Mammary epithelial cell (primary cell): ENCODE measurements at regions of chr2 and their contacts with region 1.

Region 1: DNA sequence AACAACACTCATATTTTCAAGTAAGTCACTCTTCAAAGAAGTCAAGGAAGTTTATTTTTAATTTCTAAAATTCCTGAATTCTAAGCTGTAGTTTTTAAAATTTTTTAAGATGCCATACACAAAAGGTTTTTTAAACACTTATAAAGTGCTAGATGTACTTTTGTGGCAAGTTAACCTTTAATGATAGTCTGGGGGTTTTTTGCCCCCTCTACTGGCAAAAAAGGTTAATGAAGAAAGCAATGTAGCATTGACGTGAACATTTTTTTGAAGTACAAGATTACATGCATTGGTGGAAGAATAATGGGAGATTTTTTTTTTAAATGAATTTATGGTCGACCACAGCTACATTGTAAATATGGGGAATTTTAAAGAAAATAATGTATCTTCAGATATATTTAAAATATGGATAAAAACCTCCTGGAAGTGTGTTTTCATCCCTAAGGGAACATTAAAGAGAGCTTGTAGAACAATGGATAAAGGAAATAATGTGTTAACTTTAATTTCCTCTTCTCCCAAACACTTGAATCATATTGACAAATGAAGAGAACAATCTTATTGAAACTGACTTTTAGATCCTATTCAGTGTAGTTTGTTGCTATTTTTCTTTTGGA is 12.6 kb downstream of the ITPRID2 start:
- DNase-seq: no peak
- H3K4me3 ChIP-seq: no peak overlapping the region
- H3K27ac ChIP-seq: no peak overlapping the region
- H3K4me1 ChIP-seq: peaks cover 8% of the 10 kb centered on the region
- H3K27me3 ChIP-seq: no peaks in the 10 kb centered on the region
- CTCF ChIP-seq: peak; percentile 38 to 51

Region 2: DNA sequence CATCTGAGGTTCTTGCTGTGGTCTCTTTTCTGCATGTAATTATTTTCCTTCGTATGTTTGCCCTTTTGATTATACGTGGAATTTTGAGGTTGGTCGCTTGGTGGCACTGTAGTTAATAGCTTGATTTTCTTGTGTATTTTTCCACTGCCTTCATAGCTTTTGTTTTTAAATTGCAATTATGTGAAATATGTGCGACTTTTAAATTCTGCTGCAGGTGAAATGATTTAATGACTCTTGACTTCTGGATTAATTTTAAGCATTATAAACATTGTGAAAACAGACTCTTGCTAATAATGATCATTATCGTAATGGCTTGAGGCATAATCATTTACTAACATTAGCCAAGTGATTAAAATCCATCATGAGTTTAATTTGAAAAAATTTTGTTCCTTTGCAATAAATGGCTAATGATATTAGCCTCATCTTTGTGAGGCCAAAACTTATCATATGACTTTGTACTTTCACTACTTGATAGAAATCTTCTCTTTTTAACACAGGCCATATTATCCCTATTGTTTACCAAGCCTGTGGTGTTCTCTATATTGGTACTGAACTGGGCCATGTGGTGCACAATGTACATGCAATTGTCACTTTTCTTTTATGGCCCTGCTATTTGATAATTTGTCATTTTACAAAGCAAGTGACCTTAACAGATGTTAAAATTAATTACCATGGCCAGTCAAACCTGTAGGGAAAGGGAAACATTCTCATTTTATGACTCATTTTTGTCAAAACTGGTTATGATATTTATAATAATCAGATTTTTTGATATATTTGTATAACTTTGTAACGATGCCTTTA is 161.0 kb before region 1 on chr2:
- CTCF ChIA-PET with region 1: no interaction called
- dilution Hi-C with region 1: no loop called
- in situ Hi-C with region 1: no loop called
- intact Hi-C with region 1: loop called (anchors 1 kb)
- DNase-seq: peak; percentile 55
- H3K4me3 ChIP-seq: no peak overlapping the region
- H3K27ac ChIP-seq: no peak overlapping the region
- H3K4me1 ChIP-seq: peaks cover 12% of the 10 kb centered on the region
- H3K27me3 ChIP-seq: no peaks in the 10 kb centered on the region
- CTCF ChIP-seq: peak; percentile 56 to 58

Region 3: GRCh38 chr2:181752301-181752700 is 151.8 kb before region 1 on chr2:
- CTCF ChIA-PET with region 1: no interaction called
- dilution Hi-C with region 1: no loop called
- in situ Hi-C with region 1: loop called (anchors 5 to 10 kb)
- intact Hi-C with region 1: no loop called
- DNase-seq: no peak
- H3K4me3 ChIP-seq: no peak overlapping the region
- H3K27ac ChIP-seq: no peak overlapping the region
- H3K4me1 ChIP-seq: peaks cover 5% of the 10 kb centered on the region
- H3K27me3 ChIP-seq: no peaks in the 10 kb centered on the region
- CTCF ChIP-seq: no peak

Region 4: DNA sequence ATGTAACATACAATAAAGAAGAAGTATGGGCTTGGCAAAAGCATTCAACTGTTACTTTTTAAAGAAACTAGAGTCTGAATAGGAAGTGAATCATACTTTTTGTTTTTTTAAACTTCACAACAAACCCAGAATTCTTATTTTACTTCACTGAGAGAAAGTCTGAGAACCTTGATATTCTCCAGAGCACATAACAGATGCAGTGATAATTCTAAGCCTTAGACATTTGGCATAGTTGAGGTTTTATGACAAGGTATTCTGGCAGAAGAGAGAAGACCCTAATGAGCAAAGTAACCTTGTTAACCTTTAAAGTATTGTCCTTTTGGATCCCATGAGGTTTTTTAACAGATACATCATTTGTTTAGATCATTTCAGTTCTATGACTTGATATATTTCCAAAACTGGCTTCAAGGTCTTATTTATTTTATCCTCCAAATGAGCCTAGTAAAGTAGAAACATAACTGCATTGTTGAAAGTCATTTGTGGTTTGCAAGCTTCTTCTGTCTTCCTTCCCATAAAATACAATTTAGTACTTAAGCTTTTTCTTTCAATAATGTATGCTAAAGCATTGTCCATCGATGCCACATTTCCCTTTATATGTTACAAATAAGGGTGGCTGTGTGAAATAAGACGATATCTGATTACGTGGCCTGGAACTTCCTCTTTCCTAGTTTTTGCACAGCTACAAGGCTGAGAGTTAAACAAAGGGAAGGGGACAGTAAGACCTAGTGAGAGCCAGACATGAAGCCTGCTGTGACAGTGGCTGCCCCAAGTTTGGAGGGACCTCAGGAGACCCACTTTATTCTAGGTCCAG is 98.7 kb before region 1 on chr2:
- CTCF ChIA-PET with region 1: no interaction called
- dilution Hi-C with region 1: no loop called
- in situ Hi-C with region 1: no loop called
- intact Hi-C with region 1: no loop called
- DNase-seq: no peak
- H3K4me3 ChIP-seq: no peak overlapping the region
- H3K27ac ChIP-seq: peak overlapping the region; percentile 18
- H3K4me1 ChIP-seq: peaks cover 22% of the 10 kb centered on the region
- H3K27me3 ChIP-seq: no peaks in the 10 kb centered on the region
- CTCF ChIP-seq: no peak

Region 5: GRCh38 chr2:181970160-181970794 is 66.2 kb after region 1 on chr2:
- CTCF ChIA-PET with region 1: no interaction called
- dilution Hi-C with region 1: no loop called
- in situ Hi-C with region 1: no loop called
- intact Hi-C with region 1: no loop called
- DNase-seq: no peak
- H3K4me3 ChIP-seq: no peak overlapping the region
- H3K27ac ChIP-seq: no peak overlapping the region
- H3K4me1 ChIP-seq: peaks cover 5% of the 10 kb centered on the region
- H3K27me3 ChIP-seq: no peaks in the 10 kb centered on the region
- CTCF ChIP-seq: no peak

Region 6: DNA sequence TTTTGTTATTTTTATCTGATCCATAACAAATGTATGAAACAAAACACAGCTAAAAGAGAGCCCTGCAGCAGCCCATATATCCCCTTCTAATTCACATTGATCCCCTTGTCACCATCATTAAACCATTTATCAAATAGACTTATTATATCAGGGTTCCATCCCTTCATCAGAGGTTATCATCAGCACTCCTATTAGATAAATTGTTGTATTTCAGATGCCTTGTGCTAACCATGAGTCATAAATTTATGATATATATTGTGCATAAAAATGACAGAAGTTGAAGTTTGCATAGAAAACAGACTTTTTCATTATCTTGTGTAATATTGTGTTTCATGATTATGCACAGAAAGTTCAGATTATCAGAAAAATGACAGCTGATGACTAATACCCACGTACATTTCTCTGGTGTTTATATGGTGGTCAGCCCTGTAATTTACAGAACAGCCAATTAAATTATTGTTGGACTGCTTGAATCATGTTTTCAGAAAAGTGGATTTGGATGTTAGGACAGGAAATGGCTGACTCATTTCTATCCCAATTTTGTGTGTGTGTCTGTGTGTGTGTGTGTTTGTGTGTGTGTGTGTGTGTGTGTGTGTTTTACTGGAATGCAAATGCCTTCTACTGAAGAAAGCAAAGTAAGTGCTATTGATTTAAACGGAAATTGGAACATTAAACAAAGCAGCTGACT is 162.4 kb after region 1 on chr2:
- CTCF ChIA-PET with region 1: no interaction called
- dilution Hi-C with region 1: no loop called
- in situ Hi-C with region 1: loop called in 1 of 2 experiments (anchors 25 kb)
- intact Hi-C with region 1: no loop called
- DNase-seq: peak; percentile 87
- H3K4me3 ChIP-seq: no peak overlapping the region
- H3K27ac ChIP-seq: no peak overlapping the region
- H3K4me1 ChIP-seq: peaks cover 11% of the 10 kb centered on the region
- H3K27me3 ChIP-seq: no peaks in the 10 kb centered on the region
- CTCF ChIP-seq: no peak